ENCODE measurements at regions of chr1 and their contacts with region 1.

Region 1: DNA sequence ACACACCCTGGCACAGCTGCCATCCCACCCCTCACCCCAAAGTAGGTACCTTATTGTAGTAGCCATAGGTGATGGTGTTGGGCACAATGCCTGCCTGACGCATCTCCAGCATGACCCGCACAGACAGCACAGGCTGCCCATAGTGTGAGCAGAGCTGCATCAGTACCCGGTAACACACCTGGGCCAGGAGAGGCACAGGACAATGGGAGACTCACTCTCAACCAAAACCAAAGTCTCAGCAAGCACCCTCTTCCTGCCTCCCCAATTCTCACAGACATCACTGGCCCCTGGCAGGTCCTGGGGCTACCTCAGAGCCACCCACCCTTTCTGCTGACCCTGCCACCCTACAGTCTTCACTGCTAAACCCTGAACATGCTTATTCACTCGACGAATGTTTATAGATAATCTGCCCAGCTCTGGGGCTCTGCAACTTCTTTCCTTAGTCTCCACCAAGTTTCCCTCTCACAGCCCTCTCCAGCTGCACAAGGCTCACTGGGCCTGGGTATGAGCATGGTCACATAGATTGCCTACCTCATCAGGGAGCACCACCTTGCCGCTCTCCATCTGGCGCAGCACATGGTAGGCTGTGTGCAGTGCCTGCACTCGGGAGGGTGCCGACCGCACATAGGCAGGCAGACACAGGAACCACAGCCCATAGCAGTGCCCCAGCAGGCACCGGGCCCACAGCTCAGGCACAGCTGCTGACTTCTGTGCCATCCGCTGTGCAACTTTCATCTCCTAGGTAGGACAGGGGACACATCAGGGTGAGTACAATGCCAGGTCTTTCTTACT is 10.3 kb downstream of the DENND4B start:
- DNase-seq: no peak
- H3K4me3 ChIP-seq: no peak overlapping the region
- H3K27ac ChIP-seq: no peak overlapping the region
- H3K4me1 ChIP-seq: no peaks in the 10 kb centered on the region
- H3K27me3 ChIP-seq: no peaks in the 10 kb centered on the region
- CTCF ChIP-seq: no peak
- EP300 ChIP-seq: no peak
- POLR2A ChIP-seq: no peak
- RAD21 ChIP-seq: no peak

Region 2: DNA sequence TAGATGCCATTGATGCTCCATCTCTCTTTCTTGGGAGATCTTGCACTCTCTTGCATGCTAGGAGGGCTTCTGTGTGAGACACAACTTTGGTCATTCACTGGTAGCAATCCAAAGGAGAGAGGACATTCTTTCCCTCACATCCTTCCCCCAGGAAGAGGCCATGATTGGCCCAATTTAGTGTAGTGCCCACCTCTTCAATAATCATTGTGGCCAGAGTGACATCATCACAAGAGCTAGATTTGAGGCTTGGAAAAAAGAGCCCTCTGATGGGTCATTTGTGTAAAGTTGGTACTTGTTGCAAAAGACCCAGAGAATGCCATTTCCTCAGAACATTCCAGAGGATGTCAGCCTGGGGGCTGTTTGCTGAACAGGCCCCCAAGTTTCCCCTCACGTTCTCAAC is 430.6 kb before region 1 on chr1:
- CTCF ChIA-PET with region 1: no interaction called
- POLR2A ChIA-PET with region 1: no interaction called
- DNase-seq: no peak
- H3K4me3 ChIP-seq: no peak overlapping the region
- H3K27ac ChIP-seq: no peak overlapping the region
- H3K4me1 ChIP-seq: peaks cover 0 to 2% (median 0%) of the 10 kb centered on the region in 4 experiments; a peak in 3 of 7 replicates
- H3K27me3 ChIP-seq: no peaks in the 10 kb centered on the region
- CTCF ChIP-seq: no peak
- EP300 ChIP-seq: no peak
- POLR2A ChIP-seq: no peak
- RAD21 ChIP-seq: no peak

Region 3: GRCh38 chr1:153888533-153888932 is 47.7 kb before region 1 on chr1:
- CTCF ChIA-PET with region 1: no interaction called
- POLR2A ChIA-PET with region 1: no interaction called
- DNase-seq: no peak
- H3K4me3 ChIP-seq: no peak overlapping the region
- H3K27ac ChIP-seq: no peak overlapping the region
- H3K4me1 ChIP-seq: no peaks in the 10 kb centered on the region
- H3K27me3 ChIP-seq: no peaks in the 10 kb centered on the region
- CTCF ChIP-seq: no peak
- EP300 ChIP-seq: no peak
- POLR2A ChIP-seq: no peak
- RAD21 ChIP-seq: no peak

Region 4: DNA sequence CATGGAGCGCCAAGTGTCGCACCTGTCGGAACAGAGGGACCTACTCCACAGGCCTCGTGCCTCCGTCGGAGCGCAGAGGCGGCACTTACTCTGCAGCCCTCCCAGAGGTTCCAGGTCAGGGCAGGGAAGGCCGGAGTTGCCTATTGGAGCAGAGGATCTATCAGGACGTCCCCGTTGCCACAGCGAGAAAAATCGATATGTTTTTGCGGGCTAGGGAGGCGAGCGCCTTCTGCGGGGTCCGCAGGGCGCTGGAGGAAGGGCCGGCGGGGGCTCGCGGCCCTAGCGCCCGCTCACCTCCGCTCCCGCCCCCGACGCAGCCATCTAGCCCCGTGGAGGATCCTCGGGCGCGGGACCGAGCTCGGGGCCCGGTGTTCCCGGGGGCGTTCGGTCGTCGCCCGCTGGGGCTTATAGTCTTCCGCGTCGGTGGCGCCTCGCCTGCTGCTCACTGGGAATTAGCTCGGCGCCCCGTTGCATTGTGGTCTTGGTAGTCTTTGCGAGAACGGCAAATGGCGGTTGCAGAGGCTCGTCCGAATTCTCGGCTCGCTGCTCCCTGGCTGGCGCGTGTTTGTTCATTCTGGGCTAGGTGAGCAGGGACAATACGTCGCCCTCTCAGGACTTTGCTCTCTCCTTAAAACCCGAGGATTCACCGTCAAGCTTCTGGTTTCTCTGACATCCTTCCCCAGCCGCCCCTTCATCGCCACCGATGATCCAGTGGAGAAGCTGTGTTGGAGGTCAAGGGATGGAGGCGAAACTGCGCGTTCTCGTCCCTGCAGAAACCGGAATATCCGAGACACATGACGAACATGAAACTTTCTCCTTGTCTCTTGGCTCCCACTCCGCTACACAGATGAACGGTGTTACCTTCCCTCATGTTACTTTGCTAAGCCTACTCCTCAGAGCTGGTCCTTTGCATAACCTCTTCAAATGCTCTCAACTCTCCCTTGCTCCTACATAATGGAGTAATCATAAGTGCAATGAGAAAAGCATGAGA is 41.3 kb after region 1 on chr1 and contains the start of gene JTB:
- CTCF ChIA-PET with region 1: no interaction called
- POLR2A ChIA-PET with region 1: interaction called, 10 read pairs
- DNase-seq: peak in 1 of 2 experiments; percentile 88
- H3K4me3 ChIP-seq: peak within 1 kb of the TSS; percentile 91 to 99 (median 93)
- H3K27ac ChIP-seq: peak within 1 kb of the TSS; percentile 66
- H3K4me1 ChIP-seq: no peaks in the 10 kb centered on the region; a peak in 1 of 7 replicates
- H3K27me3 ChIP-seq: no peaks in the 10 kb centered on the region
- CTCF ChIP-seq: no peak
- EP300 ChIP-seq: no peak
- POLR2A ChIP-seq: peak; percentile 76 to 78
- RAD21 ChIP-seq: no peak
- total RNA-seq, gene JTB: 91.1 and 93.0 TPM in 2 replicates

Measured in H1 (cell line).